Transverse colon (tissue), 4 donors: ENCODE measurements at regions of chr6 and their contacts with region 1.

Region 1: GRCh38 chr6:157184202-157185020 is 138.9 kb downstream of the TMEM242 start:
- DNase-seq: peak; percentile 81
- H3K4me3 ChIP-seq: peak overlapping the region in 1 of 4 donors; percentile 26
- H3K27ac ChIP-seq: peak overlapping the region in 3 of 4 donors; percentile 7 to 36 (median 30)
- H3K4me1 ChIP-seq: peaks cover 8 to 38% (median 22%) of the 10 kb centered on the region in 4 donors
- H3K27me3 ChIP-seq: no peaks in the 10 kb centered on the region
- CTCF ChIP-seq: peak; percentile 86 to 94 (median 90)
- EP300 ChIP-seq: no peak
- POLR2A ChIP-seq: no peak

Region 2: GRCh38 chr6:156579564-156579963 is 604.8 kb before region 1 on chr6:
- in situ Hi-C with region 1: loop called in 2 of 4 experiments (anchors 25 kb)
- intact Hi-C with region 1: loop called (anchors 10 kb)
- DNase-seq: no peak
- H3K4me3 ChIP-seq: no peak overlapping the region
- H3K27ac ChIP-seq: no peak overlapping the region
- H3K4me1 ChIP-seq: no peaks in the 10 kb centered on the region
- H3K27me3 ChIP-seq: no peaks in the 10 kb centered on the region
- CTCF ChIP-seq: no peak
- EP300 ChIP-seq: no peak
- POLR2A ChIP-seq: no peak

Region 3: GRCh38 chr6:157034436-157035230 is 149.8 kb before region 1 on chr6:
- in situ Hi-C with region 1: loop called in 2 of 4 experiments (anchors 25 kb)
- intact Hi-C with region 1: no loop called
- DNase-seq: no peak
- H3K4me3 ChIP-seq: no peak overlapping the region
- H3K27ac ChIP-seq: peak overlapping the region in 3 of 4 donors; percentile 65 to 80 (median 74)
- H3K4me1 ChIP-seq: peaks cover 4 to 42% (median 15%) of the 10 kb centered on the region in 4 donors
- H3K27me3 ChIP-seq: no peaks in the 10 kb centered on the region
- CTCF ChIP-seq: peak; percentile 60 to 79 (median 65)
- EP300 ChIP-seq: no peak
- POLR2A ChIP-seq: no peak

Region 4: GRCh38 chr6:157045831-157046454 is 138.5 kb before region 1 on chr6:
- in situ Hi-C with region 1: loop called in 2 of 4 experiments (anchors 25 kb)
- intact Hi-C with region 1: loop called (anchors 10 kb)
- DNase-seq: no peak
- H3K4me3 ChIP-seq: no peak overlapping the region
- H3K27ac ChIP-seq: no peak overlapping the region
- H3K4me1 ChIP-seq: peaks cover 0 to 6% (median 0%) of the 10 kb centered on the region in 4 donors
- H3K27me3 ChIP-seq: no peaks in the 10 kb centered on the region
- CTCF ChIP-seq: peak; percentile 35 to 57 (median 54)
- EP300 ChIP-seq: no peak
- POLR2A ChIP-seq: no peak

Region 5: DNA sequence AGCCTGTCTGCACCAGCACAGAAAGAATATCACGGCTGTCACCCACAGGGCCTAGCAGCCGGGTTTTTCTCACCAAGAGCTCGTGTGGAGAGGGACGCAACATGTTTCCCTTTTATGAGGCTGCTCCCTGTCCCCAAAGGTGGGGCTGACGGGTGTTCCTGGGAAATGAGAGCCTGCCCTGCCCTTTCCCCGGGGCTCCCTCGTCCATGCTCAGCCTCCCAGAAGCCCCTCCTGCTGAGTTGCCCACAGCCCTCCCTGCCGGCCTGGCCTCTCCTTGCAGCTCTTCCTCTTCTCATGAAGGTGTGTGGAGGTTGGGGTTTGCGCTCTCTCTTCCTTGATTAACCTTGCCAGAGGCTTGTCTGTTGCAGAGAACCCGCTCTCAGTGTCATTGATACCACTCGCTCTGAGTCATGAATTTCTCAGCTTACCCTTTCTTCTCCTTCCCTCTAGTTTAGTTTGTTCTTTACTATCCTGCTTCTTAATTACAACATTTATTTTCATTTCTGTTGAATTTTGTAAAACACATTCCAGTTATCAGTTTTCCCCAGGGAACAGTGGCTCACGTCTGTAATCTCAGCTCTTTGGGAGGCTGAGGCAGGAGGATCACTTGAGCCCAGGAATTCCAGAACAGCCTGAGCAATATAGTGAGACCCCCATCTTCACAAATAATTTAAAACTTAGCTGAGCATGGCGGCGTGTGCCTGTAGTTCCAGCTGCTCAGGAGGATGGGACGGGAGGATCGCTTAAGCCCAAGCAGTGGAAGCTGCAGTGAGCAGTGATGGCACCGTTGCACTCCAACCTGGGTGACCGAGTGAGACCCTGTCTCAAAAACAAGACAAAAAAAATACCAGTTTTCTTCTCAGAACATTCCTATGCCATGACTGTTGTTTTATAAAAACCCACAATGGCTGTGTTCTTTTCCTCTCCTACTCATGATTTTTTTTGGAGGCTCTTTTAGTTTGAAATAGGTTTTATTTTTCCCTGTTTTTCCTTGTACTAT is 35.1 kb after region 1 on chr6:
- in situ Hi-C with region 1: no loop called
- intact Hi-C with region 1: no loop called
- DNase-seq: no peak
- H3K4me3 ChIP-seq: no peak overlapping the region
- H3K27ac ChIP-seq: no peak overlapping the region
- H3K4me1 ChIP-seq: peaks cover 0 to 14% (median 8%) of the 10 kb centered on the region in 4 donors
- H3K27me3 ChIP-seq: no peaks in the 10 kb centered on the region
- CTCF ChIP-seq: no peak
- EP300 ChIP-seq: no peak
- POLR2A ChIP-seq: no peak

Region 6: DNA sequence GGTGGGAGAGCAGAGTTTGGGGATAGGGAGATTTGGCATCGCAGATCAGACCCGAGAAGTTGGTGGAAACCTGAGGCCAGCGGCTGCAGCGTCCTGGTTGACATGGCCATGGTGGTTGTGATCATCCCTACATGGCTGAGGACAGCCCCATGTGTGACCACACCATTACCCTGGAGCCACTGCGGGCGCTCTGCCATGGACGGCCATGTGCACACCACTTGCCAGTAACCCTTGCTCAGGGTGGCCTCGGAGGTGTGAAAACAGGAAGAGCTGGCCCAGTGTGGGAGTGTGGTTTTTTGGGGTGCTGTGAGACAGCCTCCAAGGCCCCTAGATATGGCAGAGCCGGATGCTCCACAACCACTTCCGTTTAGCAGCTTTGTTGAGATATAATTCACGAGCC is 74.5 kb after region 1 on chr6:
- in situ Hi-C with region 1: no loop called
- intact Hi-C with region 1: no loop called
- DNase-seq: no peak
- H3K4me3 ChIP-seq: no peak overlapping the region
- H3K27ac ChIP-seq: no peak overlapping the region
- H3K4me1 ChIP-seq: peaks cover 0 to under 1% (median 0%) of the 10 kb centered on the region in 4 donors
- H3K27me3 ChIP-seq: no peaks in the 10 kb centered on the region
- CTCF ChIP-seq: no peak
- EP300 ChIP-seq: no peak
- POLR2A ChIP-seq: no peak

Region 7: GRCh38 chr6:157281570-157281969 is 97.2 kb after region 1 on chr6:
- in situ Hi-C with region 1: no loop called
- intact Hi-C with region 1: no loop called
- DNase-seq: peak; percentile 60
- H3K4me3 ChIP-seq: no peak overlapping the region
- H3K27ac ChIP-seq: no peak overlapping the region
- H3K4me1 ChIP-seq: no peaks in the 10 kb centered on the region
- H3K27me3 ChIP-seq: no peaks in the 10 kb centered on the region
- CTCF ChIP-seq: peak; percentile 21 to 67 (median 56)
- EP300 ChIP-seq: no peak
- POLR2A ChIP-seq: no peak